Breast epithelium (tissue), 4 donors: ENCODE measurements at regions of chr9 and their contacts with region 1.

Region 1: GRCh38 chr9:92325269-92325990 is at the starts of genes CENPP and NOL8:
- DNase-seq: peak; percentile 71 to 79
- H3K4me3 ChIP-seq: peak within 1 kb of the TSS; percentile 77 to 84 (median 84)
- H3K27ac ChIP-seq: peak within 1 kb of the TSS; percentile 98
- H3K4me1 ChIP-seq: peaks cover 0 to 4% of the 10 kb centered on the region in 2 donors
- H3K27me3 ChIP-seq: no peaks in the 10 kb centered on the region
- CTCF ChIP-seq: peak in 1 of 3 donors; percentile 17
- POLR2A ChIP-seq: peak; percentile 10
- total RNA-seq, gene CENPP: 3.9 to 6.1 (median 4.5) TPM
- total RNA-seq, gene NOL8: 31.2 to 66.6 (median 49.8) TPM

Region 2: DNA sequence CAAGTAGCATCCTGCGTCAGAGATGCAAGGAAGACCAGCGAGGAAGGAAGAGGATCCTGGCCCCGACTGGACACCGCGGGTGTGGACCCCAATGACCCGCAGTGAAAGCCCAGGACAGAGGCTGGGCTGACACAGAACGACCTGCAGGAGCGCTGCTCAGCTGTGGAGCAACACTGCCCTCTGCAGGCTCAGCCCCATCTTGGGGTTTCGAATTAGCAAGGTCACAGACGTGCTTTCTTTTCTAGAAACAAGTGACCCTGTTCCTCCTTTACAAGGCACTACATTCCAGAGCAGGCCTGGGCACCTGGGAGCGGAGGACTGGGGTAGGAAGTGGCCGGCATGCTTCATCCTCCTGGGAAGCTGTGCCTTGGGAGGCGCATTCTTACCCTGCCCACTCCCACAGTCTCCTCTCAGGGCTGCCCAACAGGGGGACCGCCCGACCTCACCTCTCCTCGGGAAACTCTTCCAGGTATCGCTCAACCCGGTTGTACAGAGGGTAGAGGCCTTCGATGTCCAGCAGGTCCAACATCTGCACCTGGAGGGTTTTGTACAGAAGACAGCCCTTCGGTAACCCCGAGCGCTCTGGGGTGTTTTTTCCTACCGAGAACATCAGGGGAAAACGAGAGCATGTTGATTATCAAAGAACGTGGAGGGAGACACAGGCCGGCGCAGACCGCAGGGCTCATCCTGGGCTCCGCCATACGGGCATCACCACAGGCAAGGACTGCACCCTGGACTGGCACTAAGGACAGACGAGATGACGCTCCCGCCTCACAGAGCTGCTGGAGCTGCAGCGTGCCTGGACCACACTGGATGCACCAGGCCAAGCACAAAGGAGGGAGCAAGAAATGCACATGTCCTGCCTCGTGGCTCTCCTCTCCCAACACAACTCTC is 309.5 kb after region 1 on chr9:
- intact Hi-C with region 1: loop called (anchors 5 kb)
- DNase-seq: peak; percentile 36 to 72
- H3K4me3 ChIP-seq: no peak overlapping the region
- H3K27ac ChIP-seq: peak overlapping the region in 1 of 2 donors; percentile 46
- H3K4me1 ChIP-seq: no peaks in the 10 kb centered on the region
- H3K27me3 ChIP-seq: no peaks in the 10 kb centered on the region
- CTCF ChIP-seq: peak; percentile 52 to 92 (median 83)
- POLR2A ChIP-seq: no peak